Natural killer cell (primary cell): ENCODE measurements at regions of chr11 and their contacts with region 1.

Region 1: DNA sequence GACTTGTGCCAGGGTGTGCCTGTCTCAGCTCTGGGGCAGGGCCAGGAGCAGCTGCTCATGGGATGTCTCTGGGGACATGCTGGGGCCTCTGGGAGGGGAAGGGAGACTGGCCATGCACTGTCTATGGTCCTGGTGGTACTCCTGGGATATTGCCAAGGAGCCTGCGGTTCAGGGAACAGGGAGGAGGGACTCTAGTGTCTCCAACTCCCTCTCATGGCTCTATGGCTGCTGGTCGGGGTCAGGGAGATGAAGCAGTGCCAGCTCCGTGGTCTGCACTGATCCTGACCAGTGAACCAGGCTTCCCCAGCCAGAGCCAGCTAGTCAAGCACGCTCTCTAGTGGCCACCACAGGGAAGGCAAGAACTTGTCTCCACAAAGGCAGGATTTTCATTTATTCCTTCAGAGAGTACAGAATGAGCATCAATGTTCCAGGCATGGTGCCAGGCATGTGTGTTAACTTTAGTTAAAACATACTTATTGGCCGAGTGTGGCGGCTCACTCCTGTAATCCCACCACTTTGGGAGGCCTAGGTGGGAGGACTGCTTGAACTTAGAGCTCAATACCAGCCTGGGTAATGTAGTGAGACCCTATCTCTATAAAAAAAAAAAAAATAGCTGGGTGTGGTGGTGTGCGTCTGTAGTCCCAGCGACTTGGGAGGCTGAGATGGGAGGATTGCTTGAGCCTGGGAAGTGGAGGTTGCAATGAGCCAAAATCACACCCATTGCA is 2.5 kb upstream of the BEST1 start:
- DNase-seq: peak; percentile 54 to 82
- ATAC-seq: peak; percentile 86 to 99 (median 93)
- H3K4me3 ChIP-seq: no peak overlapping the region
- H3K4me3 Mint-ChIP-seq: no peak overlapping the region
- H3K27ac ChIP-seq: no peak overlapping the region
- H3K27ac Mint-ChIP-seq: no peak overlapping the region
- H3K4me1 ChIP-seq: peaks cover 2% of the 10 kb centered on the region
- H3K4me1 Mint-ChIP-seq: no peaks in the 10 kb centered on the region
- H3K27me3 ChIP-seq: no peaks in the 10 kb centered on the region
- H3K27me3 Mint-ChIP-seq: no peaks in the 10 kb centered on the region
- CTCF ChIP-seq: peak; percentile 85

Region 2: DNA sequence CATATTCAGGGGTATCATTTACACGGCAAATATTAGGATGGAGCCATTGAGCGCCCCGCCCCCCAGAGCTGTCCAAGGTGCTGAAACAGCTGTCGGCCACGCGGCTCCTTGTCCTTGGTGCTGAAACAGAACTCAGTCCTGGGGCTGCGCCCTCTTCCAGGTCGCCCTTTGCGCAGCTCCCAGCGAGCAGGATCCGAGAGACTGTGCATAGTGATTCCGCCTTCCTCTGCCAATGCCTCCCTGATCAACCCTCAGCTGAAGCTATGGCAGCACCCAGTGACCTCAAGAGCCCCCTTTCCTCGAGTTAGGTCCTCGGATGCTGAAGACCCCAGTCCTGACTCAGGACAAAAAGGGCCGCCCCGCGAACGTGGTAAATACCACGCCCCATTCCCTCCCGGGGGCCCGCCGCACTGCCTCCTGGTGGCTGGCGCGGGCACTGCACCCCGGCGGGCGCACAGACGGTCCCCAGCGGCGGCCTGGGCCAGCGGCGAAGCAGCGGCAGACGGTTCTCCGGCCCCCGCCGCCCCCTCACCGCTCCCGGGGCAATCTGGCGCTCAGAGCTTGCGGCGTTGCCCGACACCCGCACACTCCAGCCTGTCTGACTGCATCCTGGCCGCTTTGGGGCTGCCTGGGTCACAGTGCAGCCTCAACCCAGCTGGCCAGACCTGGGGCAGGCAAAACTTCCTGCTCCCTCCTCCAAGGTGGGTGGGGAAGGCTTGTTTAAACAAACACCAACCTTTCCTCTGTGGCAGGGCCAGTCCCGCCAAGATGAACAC is 380.2 kb before region 1 on chr11:
- intact Hi-C with region 1: no loop called
- DNase-seq: peak; percentile 66 to 84
- ATAC-seq: peak; percentile 80 to 98 (median 92)
- H3K4me3 ChIP-seq: no peak overlapping the region
- H3K4me3 Mint-ChIP-seq: no peak overlapping the region
- H3K27ac ChIP-seq: no peak overlapping the region
- H3K27ac Mint-ChIP-seq: no peak overlapping the region
- H3K4me1 ChIP-seq: peaks cover 3% of the 10 kb centered on the region
- H3K4me1 Mint-ChIP-seq: peaks cover 0 to 5% of the 10 kb centered on the region in 2 donors
- H3K27me3 ChIP-seq: peaks cover 13% of the 10 kb centered on the region
- H3K27me3 Mint-ChIP-seq: peaks cover 22 to 38% of the 10 kb centered on the region in 2 donors
- CTCF ChIP-seq: no peak

Region 3: DNA sequence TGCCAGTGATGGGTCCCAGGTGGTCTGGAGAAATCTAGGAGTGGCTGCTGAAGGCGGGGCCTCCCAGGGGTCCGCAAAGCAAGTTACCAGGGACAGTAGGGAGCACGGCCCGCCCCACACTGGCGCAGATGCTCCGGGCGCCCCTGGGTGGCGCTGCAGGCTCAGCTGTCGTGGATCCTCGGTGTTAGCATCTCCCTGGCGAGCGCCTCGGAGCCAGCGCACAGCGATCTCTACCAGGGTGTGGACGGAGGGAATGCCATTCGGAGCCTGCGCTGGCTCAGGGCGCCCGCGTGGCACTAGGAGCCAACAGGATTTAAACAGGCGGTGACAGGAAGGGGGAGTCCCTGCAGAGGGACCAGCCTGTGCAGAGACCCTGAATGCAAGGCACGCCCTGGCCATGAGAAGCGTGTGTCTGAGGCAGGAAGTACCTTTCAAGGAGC is 76.5 kb before region 1 on chr11:
- intact Hi-C with region 1: loop called (anchors 2 kb)
- DNase-seq: peak; percentile 57 to 79
- ATAC-seq: peak; percentile 87 to 99 (median 97)
- H3K4me3 ChIP-seq: no peak overlapping the region
- H3K4me3 Mint-ChIP-seq: peak overlapping the region; percentile 67
- H3K27ac ChIP-seq: no peak overlapping the region
- H3K27ac Mint-ChIP-seq: no peak overlapping the region
- H3K4me1 ChIP-seq: peaks cover 8% of the 10 kb centered on the region
- H3K4me1 Mint-ChIP-seq: peaks cover 6 to 8% of the 10 kb centered on the region in 2 donors
- H3K27me3 ChIP-seq: no peaks in the 10 kb centered on the region
- H3K27me3 Mint-ChIP-seq: no peaks in the 10 kb centered on the region
- CTCF ChIP-seq: peak; percentile 73

Region 4: DNA sequence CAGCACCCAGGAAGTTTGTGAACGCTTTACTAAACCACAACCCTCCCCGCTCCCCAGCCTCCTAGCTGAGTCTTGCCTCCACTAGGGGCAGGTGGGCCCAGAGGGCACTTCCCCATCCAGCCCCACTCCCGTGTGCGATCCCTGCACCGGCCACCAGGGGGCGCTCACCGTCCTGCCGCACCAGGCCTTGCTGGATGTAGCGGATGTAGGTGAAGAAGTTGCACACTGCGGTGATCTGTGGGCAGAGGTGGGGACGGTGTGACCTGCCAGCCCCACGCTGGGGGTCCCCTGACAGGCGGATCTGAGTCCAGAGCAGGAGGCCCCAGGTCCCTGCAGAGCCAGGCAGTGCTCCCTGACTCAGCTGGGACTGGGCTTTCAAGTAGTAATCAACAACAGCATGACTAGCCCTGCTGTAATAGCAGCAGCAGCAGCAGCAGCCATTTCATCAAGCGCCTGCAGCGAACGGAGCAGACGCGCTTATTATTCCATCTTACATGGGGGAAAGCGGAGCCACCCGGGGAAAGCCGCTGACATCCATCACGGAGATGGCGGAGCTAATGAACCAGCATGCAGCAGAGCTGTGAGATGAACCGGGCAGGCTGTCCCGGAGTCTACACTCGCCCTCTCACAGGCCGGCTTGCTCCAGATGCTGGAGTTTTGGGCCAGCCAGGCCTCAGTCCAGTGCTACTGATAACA is 48.4 kb before region 1 on chr11:
- intact Hi-C with region 1: loop called (anchors 1 kb)
- DNase-seq: peak; percentile 92 to 94
- ATAC-seq: peak; percentile 95 to 96 (median 95)
- H3K4me3 ChIP-seq: no peak overlapping the region
- H3K4me3 Mint-ChIP-seq: peak overlapping the region; percentile 28
- H3K27ac ChIP-seq: no peak overlapping the region
- H3K27ac Mint-ChIP-seq: peak overlapping the region; percentile 50 to 74
- H3K4me1 ChIP-seq: peaks cover 11% of the 10 kb centered on the region
- H3K4me1 Mint-ChIP-seq: peaks cover 0 to 7% of the 10 kb centered on the region in 2 donors
- H3K27me3 ChIP-seq: no peaks in the 10 kb centered on the region
- H3K27me3 Mint-ChIP-seq: peaks cover 0 to 3% of the 10 kb centered on the region in 2 donors
- CTCF ChIP-seq: peak; percentile 99